Naive thymus-derived CD4-positive, alpha-beta T cell (primary cell): ENCODE measurements at regions of chrX and their contacts with region 1.

Region 1: DNA sequence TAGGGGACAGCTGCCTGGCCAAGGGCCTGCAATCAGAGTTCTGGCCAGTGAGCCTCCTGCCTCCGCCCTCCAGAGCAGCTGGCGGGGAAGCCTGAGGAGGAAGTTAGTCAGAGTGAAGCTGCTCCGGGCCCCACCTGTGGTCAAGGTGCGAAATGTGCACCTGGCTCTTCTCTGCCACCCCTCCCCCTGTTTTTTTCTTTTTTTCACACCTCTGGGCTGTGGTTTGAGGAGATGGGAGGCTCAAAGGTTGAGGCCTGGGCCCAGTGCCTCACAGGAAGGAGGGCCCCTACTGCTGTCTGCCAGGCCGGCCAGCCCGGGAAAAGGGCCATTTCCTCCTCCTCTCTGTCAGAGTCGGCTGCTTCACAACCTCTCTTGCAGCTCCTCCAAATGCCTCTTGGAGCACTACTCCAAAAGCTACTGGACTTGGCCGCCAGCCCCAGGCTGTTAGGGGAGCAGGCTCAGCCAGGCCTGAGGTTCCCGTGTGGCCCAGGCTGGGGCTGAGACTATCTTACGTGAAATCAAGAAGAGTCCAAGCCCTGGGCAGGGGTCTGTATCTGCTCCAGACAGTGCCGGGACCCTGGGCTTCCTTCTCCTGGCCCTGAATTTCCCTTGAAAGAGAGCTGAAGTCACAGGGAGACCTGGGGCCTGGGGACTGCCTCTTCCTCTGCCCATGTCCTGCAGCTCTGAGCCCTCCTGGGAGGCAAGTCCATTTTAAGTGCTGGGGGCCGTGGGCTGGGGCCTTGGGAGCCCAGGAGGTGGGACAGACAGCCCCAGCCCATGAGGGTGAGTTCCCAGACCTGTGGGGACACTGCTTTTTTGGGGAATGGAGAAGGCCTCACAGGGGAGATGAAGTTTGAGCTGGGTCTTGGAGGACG is 4.5 kb upstream of the CXCR3 start:
- DNase-seq: peak in 7 of 9 donors; percentile 12 to 61 (median 25)
- ATAC-seq: peak; percentile 75
- H3K4me3 ChIP-seq: peak overlapping the region; percentile 24
- H3K4me3 Mint-ChIP-seq: peak overlapping the region in 9 of 10 donors; percentile 5 to 74 (median 47)
- H3K27ac ChIP-seq: no peak overlapping the region
- H3K27ac Mint-ChIP-seq: peak overlapping the region; percentile 71 to 92 (median 80)
- H3K4me1 ChIP-seq: peaks cover 41 to 46% of the 10 kb centered on the region in 2 donors
- H3K4me1 Mint-ChIP-seq: peaks cover 25 to 68% (median 53%) of the 10 kb centered on the region in 7 donors
- H3K27me3 ChIP-seq: no peaks in the 10 kb centered on the region
- H3K27me3 Mint-ChIP-seq: no peaks in the 10 kb centered on the region

Region 2: GRCh38 chrX:71609095-71609750 is 13.6 kb before region 1 on chrX:
- CTCF ChIA-PET with region 1: no interaction called
- POLR2A ChIA-PET with region 1: interaction called, 7 read pairs
- intact Hi-C with region 1: loop called (anchors 1 kb)
- DNase-seq: peak in 4 of 9 donors; percentile 12 to 29 (median 18)
- ATAC-seq: peak; percentile 37
- H3K4me3 ChIP-seq: no peak overlapping the region
- H3K4me3 Mint-ChIP-seq: peak overlapping the region in 3 of 10 donors; percentile 1 to 37 (median 16)
- H3K27ac ChIP-seq: no peak overlapping the region
- H3K27ac Mint-ChIP-seq: peak overlapping the region; percentile 6 to 91 (median 74)
- H3K4me1 ChIP-seq: peaks cover 32 to 42% of the 10 kb centered on the region in 2 donors
- H3K4me1 Mint-ChIP-seq: peaks cover 13 to 66% (median 44%) of the 10 kb centered on the region in 7 donors
- H3K27me3 ChIP-seq: no peaks in the 10 kb centered on the region
- H3K27me3 Mint-ChIP-seq: no peaks in the 10 kb centered on the region

Region 3: GRCh38 chrX:71637848-71638247 is 15.0 kb after region 1 on chrX:
- CTCF ChIA-PET with region 1: no interaction called
- POLR2A ChIA-PET with region 1: interaction called, 4 read pairs
- intact Hi-C with region 1: loop called (anchors 2 kb)
- DNase-seq: no peak
- ATAC-seq: no peak
- H3K4me3 ChIP-seq: no peak overlapping the region
- H3K4me3 Mint-ChIP-seq: no peak overlapping the region
- H3K27ac ChIP-seq: no peak overlapping the region
- H3K27ac Mint-ChIP-seq: no peak overlapping the region
- H3K4me1 ChIP-seq: peaks cover 15 to 26% of the 10 kb centered on the region in 2 donors
- H3K4me1 Mint-ChIP-seq: peaks cover 3 to 20% (median 18%) of the 10 kb centered on the region in 7 donors
- H3K27me3 ChIP-seq: no peaks in the 10 kb centered on the region
- H3K27me3 Mint-ChIP-seq: no peaks in the 10 kb centered on the region